Activated CD4-positive, alpha-beta T cell treated with anti-CD3 and anti-CD28 coated beads for 36 hours (primary cell): ENCODE measurements at regions of chr2 and their contacts with region 1.

Region 1: GRCh38 chr2:147572622-147573021 is 272.2 kb upstream of the ACVR2A start:
- DNase-seq: no peak
- ATAC-seq: no peak
- H3K4me3 Mint-ChIP-seq: no peak overlapping the region
- H3K27ac Mint-ChIP-seq: no peak overlapping the region
- H3K4me1 Mint-ChIP-seq: no peaks in the 10 kb centered on the region
- H3K27me3 Mint-ChIP-seq: no peaks in the 10 kb centered on the region

Region 2: DNA sequence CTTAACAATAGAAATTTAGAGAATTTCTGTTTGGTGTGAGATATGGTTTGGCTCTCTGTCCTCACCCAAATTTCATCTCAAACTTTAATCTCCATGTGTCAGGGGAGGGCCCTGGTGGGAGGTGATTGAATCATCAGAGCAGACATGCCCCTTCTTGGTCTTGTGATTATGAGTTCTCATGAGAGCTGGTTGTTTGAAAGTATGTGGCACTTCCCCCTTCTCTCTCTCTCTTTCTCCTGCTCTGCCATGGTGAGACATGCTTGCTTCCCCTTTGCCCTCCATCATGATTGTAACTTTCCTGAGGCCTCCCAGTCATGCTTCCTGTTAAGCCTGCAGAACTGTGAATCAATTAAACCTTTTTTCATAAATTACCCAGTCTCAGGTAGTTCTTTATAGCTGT is 252.5 kb before region 1 on chr2:
- CTCF ChIA-PET with region 1: no interaction called
- POLR2A ChIA-PET with region 1: no interaction called
- intact Hi-C with region 1: no loop called
- DNase-seq: no peak
- ATAC-seq: no peak
- H3K4me3 Mint-ChIP-seq: no peak overlapping the region
- H3K27ac Mint-ChIP-seq: no peak overlapping the region
- H3K4me1 Mint-ChIP-seq: no peaks in the 10 kb centered on the region
- H3K27me3 Mint-ChIP-seq: no peaks in the 10 kb centered on the region

Region 3: GRCh38 chr2:147609301-147609700 is 36.7 kb after region 1 on chr2:
- CTCF ChIA-PET with region 1: no interaction called
- POLR2A ChIA-PET with region 1: no interaction called
- intact Hi-C with region 1: loop called in 1 of 2 experiments (anchors 1 kb)
- DNase-seq: no peak
- ATAC-seq: no peak
- H3K4me3 Mint-ChIP-seq: no peak overlapping the region
- H3K27ac Mint-ChIP-seq: no peak overlapping the region
- H3K4me1 Mint-ChIP-seq: peaks cover 3% of the 10 kb centered on the region
- H3K27me3 Mint-ChIP-seq: no peaks in the 10 kb centered on the region

Region 4: GRCh38 chr2:147756103-147756502 is 183.5 kb after region 1 on chr2:
- CTCF ChIA-PET with region 1: no interaction called
- POLR2A ChIA-PET with region 1: no interaction called
- intact Hi-C with region 1: no loop called
- DNase-seq: no peak
- ATAC-seq: no peak
- H3K4me3 Mint-ChIP-seq: no peak overlapping the region
- H3K27ac Mint-ChIP-seq: no peak overlapping the region
- H3K4me1 Mint-ChIP-seq: no peaks in the 10 kb centered on the region
- H3K27me3 Mint-ChIP-seq: no peaks in the 10 kb centered on the region